OCI-LY7 (cell line): ENCODE measurements at regions of chr5 and their contacts with region 1.

Region 1: GRCh38 chr5:32406650-32407049 is 37.9 kb downstream of the ZFR start:
- DNase-seq: peak; percentile 6
- H3K4me3 ChIP-seq: no peak overlapping the region
- H3K27ac ChIP-seq: no peak overlapping the region
- H3K4me1 ChIP-seq: no peaks in the 10 kb centered on the region
- CTCF ChIP-seq: no peak

Region 2: DNA sequence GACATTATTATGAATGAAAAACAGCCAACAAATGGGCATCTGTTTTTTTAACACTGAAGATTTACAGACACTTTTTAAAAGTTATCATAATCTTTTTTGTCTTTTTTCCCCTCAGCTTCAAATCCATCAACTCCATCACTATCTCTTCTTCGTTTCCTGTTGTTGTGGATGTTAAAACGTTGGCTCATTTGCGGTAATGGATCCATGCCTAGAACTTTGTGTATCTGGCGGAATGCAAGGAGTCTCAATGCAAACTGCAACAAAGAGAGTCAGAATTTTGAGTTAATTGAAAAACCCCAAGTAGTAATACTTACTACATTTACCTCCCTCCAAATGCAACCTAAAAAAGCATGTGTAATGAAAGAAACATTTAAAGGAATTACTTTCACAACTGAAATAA is 51.0 kb before region 1 on chr5:
- CTCF ChIA-PET with region 1: no interaction called
- POLR2A ChIA-PET with region 1: no interaction called
- intact Hi-C with region 1: loop called (anchors 5 kb)
- DNase-seq: no peak
- H3K4me3 ChIP-seq: no peak overlapping the region
- H3K27ac ChIP-seq: no peak overlapping the region
- H3K4me1 ChIP-seq: no peaks in the 10 kb centered on the region
- CTCF ChIP-seq: no peak

Region 3: GRCh38 chr5:32369542-32370155 is 37.0 kb before region 1 on chr5:
- CTCF ChIA-PET with region 1: no interaction called
- POLR2A ChIA-PET with region 1: interaction called, 6 read pairs
- intact Hi-C with region 1: loop called (anchors 5 kb)
- DNase-seq: no peak
- H3K4me3 ChIP-seq: no peak overlapping the region
- H3K27ac ChIP-seq: no peak overlapping the region
- H3K4me1 ChIP-seq: no peaks in the 10 kb centered on the region
- CTCF ChIP-seq: no peak